ENCODE measurements at regions of chr2 and their contacts with region 1.

Region 1: DNA sequence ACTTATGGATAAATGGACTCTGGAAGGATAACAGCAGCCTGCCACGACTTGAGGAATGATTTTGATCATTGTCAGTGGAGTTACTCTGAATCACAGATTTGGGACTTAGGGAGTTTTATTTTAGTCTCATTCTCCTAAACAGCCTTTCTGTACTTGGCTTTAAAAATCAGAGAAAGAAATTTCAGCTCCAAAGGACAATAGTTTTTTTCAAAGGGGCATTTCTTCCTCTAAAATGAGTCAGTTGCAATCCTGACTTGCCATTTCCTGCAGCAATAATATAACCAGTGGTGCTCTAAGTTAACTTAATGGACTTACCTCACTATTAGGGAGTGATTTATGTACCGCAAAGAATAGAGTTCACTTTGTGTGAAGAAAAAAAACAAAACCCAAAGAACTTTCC is 35.1 kb upstream of the MTX2 start:
- DNase-seq: peak; percentile 18
- H3K4me3 ChIP-seq: no peak overlapping the region
- H3K27ac ChIP-seq: no peak overlapping the region
- H3K4me1 ChIP-seq: no peaks in the 10 kb centered on the region
- H3K27me3 ChIP-seq: no peaks in the 10 kb centered on the region
- CTCF ChIP-seq: no peak

Region 2: GRCh38 chr2:176395273-176395854 is 161.2 kb after region 1 on chr2:
- CTCF ChIA-PET with region 1: interaction called, 10 read pairs
- POLR2A ChIA-PET with region 1: no interaction called
- intact Hi-C with region 1: no loop called
- DNase-seq: no peak
- H3K4me3 ChIP-seq: no peak overlapping the region
- H3K27ac ChIP-seq: no peak overlapping the region
- H3K4me1 ChIP-seq: peaks cover 17% of the 10 kb centered on the region
- H3K27me3 ChIP-seq: no peaks in the 10 kb centered on the region
- CTCF ChIP-seq: no peak

Measured in A673 (cell line).